Dorsolateral prefrontal cortex (tissue), 120 donors: ENCODE measurements at regions of chr19 and their contacts with region 1.

Region 1: DNA sequence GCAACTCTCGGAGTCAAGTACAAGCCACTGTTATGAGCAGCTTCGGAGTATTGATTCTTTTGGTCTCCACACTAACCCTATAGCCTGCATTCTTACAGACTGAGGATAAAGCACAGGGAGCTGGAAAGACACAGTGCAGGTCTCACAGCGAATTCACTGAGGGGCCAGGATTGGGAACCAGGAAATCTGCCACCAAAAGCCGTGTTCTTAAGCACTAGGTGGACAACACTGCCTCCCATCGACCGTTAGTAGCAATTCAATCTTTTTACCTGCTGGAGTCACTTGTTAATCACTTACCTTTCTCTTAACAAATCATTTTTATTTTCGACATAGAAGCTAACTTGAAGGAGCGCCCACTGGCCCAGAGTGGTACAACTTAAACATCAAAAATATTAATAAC is 6.3 kb downstream of the PMIS2 start:
- DNase-seq: peak in 2 of 10 donors; percentile 15 to 33
- H3K4me3 ChIP-seq: no peak overlapping the region
- H3K27ac ChIP-seq: no peak overlapping the region
- H3K27me3 ChIP-seq: peaks cover 0 to 11% (median 0%) of the 10 kb centered on the region in 45 donors
- CTCF ChIP-seq: peak in 52 of 56 donors; percentile 20 to 72 (median 43)

Region 2: DNA sequence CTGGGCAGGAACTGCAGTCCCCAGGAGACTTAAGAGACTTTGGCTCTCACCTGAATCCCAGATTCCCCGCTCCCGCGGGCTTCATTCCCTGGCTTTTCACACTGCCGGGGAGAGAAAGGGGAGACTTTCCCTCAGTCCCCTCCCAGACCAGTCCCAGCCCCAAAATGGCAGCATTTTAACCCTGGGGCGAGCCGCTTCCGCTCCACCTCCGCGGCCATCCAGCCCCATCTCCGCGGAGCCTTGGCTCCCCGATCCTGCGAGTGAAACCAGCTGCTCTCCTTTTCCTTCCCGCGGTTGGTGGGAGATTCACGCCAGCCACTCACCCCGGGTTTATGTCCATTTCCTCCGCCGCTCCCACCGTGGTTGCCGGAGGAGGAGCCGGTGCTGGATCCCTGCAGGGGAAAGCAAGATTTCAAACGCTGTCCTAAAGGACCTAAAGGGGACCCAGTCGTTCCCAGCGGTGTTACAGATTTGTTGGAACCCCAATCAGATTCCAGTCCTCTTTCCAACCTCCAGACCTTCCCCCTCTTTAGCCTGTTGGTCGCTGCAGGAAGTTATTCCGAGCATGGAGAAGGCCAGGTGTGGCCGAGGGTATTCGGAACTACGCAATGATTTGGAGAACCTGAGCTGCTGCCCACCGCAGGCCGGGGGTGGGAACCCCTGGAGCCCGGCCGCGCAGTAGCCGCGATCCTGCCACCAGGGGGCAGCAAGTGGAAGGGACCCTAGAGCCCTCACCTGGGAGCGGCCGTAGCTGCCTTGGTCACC is 82.2 kb before region 1 on chr19:
- intact Hi-C with region 1: loop called in 1 of 2 experiments (anchors 10 kb)
- DNase-seq: peak; percentile 42 to 78 (median 63)
- H3K4me3 ChIP-seq: peak overlapping the region; percentile 19 to 70 (median 53)
- H3K27ac ChIP-seq: peak overlapping the region in 31 of 59 donors; percentile 4 to 72 (median 38)
- H3K27me3 ChIP-seq: peaks cover 0 to 50% (median 7%) of the 10 kb centered on the region in 45 donors
- CTCF ChIP-seq: peak; percentile 64 to 93 (median 86)